Activated CD4-positive, alpha-beta memory T cell treated with anti-CD3 and anti-CD28 coated beads, Interleukin-2, amount 10 ng/mL, durations not matched to agents 7 days and 5 days (primary cell): ENCODE measurements at regions of chr10 and their contacts with region 1.

Region 1: GRCh38 chr10:129030996-129031843 is 435.8 kb upstream of the MGMT start:
- DNase-seq: peak; percentile 55
- H3K4me3 Mint-ChIP-seq: no peak overlapping the region
- H3K27ac Mint-ChIP-seq: no peak overlapping the region
- H3K4me1 Mint-ChIP-seq: peaks cover 17% of the 10 kb centered on the region
- H3K27me3 Mint-ChIP-seq: peaks cover 6% of the 10 kb centered on the region

Region 2: DNA sequence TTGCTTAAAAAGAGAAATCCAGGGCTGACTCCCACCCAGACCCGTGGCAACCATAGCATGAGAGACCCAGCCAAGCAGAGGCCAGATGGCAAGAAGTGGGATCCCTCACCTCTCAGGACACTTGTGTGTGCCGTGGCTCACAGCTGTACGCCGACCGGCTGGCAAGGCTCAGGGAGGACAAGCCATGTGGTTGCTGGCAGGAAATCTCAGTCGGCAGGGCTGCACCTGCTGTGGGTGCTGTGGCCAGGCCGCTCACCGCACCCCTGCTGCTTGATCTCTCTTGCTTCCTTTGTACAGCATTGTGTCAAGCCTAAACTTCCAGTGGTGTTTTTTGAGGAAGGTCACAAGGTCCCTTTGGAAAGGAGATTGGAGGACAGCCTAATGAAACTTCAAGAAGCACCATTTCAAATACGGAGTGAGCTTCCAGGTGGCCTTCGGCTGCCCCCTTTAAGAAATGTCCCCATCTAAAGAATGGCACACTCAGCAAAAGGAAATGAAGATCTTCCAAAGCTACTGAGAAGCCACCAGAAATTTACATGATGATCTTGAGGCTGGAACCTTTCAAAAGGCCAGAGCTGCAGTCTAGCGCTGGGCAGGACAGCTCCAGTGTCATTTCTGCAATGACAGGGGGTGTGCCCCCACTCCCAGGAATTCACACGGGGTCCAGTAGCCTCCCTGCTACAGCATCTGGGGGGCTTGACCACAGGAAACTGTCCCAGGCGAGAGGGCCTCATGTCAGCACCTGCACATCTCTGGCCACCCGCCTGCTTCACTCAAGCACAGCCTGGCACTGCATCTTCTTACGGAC is 26.8 kb after region 1 on chr10:
- CTCF ChIA-PET with region 1: no interaction called
- POLR2A ChIA-PET with region 1: interaction called, 12 read pairs
- DNase-seq: peak; percentile 72
- H3K4me3 Mint-ChIP-seq: peak overlapping the region; percentile 18
- H3K27ac Mint-ChIP-seq: peak overlapping the region; percentile 58
- H3K4me1 Mint-ChIP-seq: peaks cover 25% of the 10 kb centered on the region
- H3K27me3 Mint-ChIP-seq: peaks cover 3% of the 10 kb centered on the region

Region 3: DNA sequence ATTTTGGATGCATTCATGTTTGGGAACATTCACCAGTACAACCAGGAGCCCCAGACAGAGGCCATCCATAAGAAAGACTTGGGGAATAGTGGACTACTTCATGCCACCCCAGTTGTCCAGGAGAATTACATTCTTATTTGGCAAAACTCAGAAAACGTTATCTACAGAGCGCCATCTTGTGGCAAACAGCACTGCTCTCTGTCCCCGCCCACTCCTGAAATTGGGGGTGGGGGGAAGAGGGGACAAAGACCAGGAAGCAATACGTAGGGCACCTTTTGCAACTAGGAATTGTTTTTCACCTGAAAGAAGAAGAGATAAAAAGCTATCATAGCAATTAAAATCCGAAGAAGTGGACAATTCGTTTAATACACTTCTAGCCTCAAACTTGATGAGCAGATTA is 301.3 kb after region 1 on chr10:
- CTCF ChIA-PET with region 1: interaction called, 15 read pairs
- POLR2A ChIA-PET with region 1: interaction called, 3 read pairs
- DNase-seq: no peak
- H3K4me3 Mint-ChIP-seq: no peak overlapping the region
- H3K27ac Mint-ChIP-seq: no peak overlapping the region
- H3K4me1 Mint-ChIP-seq: no peaks in the 10 kb centered on the region
- H3K27me3 Mint-ChIP-seq: no peaks in the 10 kb centered on the region